RWPE1 (cell line): ENCODE measurements at regions of chr12 and their contacts with region 1.

Region 1: GRCh38 chr12:546921-547845 is 87.4 kb downstream of the B4GALNT3 start:
- DNase-seq: peak; percentile 67
- H3K27ac ChIP-seq: no peak overlapping the region
- CTCF ChIP-seq: peak; percentile 82

Region 2: DNA sequence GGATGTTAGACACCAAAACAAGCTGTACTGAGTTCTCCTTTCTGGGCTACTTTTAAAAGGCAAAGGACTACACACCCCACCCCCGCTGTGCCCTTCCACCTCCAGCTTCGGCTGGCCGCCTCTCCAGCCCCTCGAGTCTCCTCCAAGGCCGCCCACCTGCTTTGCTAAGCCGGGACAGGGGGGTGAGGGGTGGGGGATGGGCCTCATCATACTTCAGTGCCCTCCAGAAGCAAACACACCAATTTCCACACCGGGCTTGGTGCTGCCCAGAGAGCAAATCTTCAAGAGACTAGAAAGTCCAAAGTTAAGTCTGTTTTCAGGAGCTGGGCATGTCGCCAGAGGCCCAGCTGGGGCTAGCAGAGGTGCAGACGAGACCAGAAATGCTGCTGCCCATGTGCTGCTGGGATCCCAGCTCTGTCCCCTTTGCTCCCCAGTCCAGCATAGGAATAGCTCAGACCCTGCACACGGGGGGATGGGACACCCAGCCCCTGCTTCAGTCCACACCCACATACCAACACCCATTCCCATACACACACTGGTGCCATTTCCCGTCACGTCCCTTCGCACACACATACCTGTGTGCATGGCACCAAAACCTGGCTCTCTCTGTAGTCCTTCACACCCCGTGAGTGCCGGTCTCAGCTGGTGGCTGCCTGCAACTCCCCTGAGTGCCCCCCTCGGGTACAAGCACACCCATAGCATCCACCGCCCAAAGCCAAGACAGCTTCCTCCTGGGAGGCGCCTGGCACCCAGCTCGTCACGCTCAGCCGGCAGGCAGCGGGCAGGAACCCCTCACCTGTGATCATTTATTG is 334.3 kb before region 1 on chr12:
- CTCF ChIA-PET with region 1: no interaction called
- POLR2A ChIA-PET with region 1: no interaction called
- DNase-seq: no peak
- H3K27ac ChIP-seq: no peak overlapping the region
- CTCF ChIP-seq: no peak

Region 3: GRCh38 chr12:401235-402028 is 145.8 kb before region 1 on chr12 and contains the start of gene CCDC77:
- CTCF ChIA-PET with region 1: no interaction called
- POLR2A ChIA-PET with region 1: no interaction called
- DNase-seq: peak; percentile 98
- H3K27ac ChIP-seq: peak within 1 kb of the TSS; percentile 76
- CTCF ChIP-seq: no peak

Region 4: DNA sequence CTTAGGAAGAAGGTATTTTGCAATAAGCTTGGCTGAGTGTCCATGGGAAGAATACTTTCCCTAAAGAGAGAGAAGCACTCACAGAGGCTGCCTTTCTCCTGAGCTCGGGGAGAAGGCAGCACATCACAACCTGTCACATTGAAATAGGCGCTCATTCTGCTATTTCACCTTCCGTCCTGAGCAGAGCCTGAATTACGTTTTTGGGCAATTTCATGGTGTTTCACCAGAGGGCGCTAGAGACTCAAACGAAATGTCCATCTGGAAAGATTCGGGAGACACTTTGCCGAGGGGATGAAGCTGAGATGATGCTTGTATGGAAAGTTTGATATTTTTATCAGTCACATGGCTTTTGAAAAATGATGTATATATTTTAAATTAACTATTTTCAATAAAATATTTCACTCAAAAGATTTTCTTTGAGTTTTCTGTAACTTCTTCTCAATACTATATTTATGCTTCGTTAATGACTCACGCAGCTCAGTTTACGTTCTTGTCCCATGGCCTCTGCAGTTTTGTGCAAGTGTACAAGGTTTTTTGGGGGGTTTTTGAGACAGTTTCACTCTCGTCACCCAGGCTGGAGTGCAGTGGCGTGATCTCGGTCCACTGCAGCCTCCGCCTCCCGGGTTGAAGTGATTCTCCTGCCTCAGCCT is 104.8 kb before region 1 on chr12:
- CTCF ChIA-PET with region 1: interaction called, 42 read pairs
- POLR2A ChIA-PET with region 1: no interaction called
- DNase-seq: peak; percentile 51
- H3K27ac ChIP-seq: no peak overlapping the region
- CTCF ChIP-seq: peak; percentile 59

Region 5: GRCh38 chr12:452667-453210 is 94.4 kb before region 1 on chr12:
- CTCF ChIA-PET with region 1: interaction called, 13 read pairs
- POLR2A ChIA-PET with region 1: no interaction called
- DNase-seq: no peak
- H3K27ac ChIP-seq: no peak overlapping the region
- CTCF ChIP-seq: no peak

Region 6: DNA sequence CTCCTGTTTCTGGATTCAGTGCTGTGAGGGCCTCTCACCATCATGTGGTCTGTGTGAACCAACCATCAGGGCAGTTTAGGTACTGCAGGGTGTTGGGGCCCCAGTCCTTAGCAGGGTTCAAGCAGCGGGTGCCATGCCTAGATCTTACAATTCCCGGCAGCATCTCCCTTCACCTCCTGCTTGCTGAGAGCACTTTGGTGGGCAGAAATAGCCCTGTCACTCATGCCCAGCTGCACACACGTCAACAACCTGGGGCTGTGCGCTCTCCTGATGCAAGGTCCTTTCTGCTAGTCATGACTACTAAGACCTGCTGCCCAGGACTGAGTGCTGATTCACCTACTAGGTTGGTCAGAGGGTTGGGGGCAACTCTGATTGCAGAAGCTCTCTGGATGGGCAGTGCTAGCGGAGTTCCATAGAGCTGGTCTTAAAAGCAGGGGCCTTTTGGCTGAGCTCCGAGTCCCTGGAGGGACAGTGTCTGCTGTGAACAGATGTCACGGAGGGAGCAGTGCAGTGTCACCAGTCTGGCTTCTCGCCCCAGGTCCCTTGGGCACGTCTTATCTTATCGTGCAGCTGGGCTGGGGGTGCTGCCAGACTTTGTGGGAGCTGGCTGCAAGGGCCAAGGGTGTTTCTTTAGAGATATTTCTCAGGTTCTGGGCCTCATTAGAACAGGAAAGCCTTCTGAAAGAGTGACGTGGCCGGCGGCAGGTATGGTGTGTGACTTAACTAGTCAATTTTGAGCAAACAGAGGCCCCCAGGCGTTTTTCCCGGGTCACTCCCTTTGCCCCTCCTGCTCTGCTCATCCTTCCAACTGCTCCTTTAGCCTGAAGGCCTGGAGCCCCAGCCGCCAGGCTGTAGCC is 44.2 kb after region 1 on chr12:
- CTCF ChIA-PET with region 1: no interaction called
- POLR2A ChIA-PET with region 1: no interaction called
- DNase-seq: no peak
- H3K27ac ChIP-seq: no peak overlapping the region
- CTCF ChIP-seq: no peak

Region 7: GRCh38 chr12:1367331-1368291 is 820.4 kb after region 1 on chr12:
- CTCF ChIA-PET with region 1: no interaction called
- POLR2A ChIA-PET with region 1: no interaction called
- DNase-seq: no peak
- H3K27ac ChIP-seq: no peak overlapping the region
- CTCF ChIP-seq: no peak